Body of pancreas (tissue), 4 donors: ENCODE measurements at regions of chr6 and their contacts with region 1.

Region 1: DNA sequence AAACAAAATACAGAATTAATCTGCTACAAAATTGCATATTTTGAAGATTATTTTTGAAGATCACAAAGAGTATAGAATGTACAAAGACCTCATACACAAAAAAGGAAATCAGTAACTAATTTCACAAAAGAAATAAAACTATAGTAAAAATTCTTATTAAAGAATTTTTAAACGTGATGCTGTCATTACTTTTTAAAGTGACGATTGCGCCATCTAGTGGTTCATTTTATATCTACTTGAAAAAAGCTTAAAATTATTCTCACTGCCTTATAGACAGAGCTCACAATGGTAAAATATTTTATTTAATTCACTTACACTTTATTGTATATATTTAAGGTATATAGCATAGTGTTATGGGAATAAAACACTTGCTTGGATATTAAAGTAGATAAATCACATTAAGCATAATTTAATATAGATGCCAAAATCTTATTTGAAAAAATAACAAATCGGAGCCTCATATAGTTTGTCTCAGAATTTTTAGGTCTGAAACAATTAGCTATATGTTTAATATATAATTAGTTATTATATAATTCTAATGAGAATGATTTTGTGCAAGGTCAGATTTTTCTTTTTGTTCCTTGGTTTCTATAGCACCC is 128.8 kb downstream of the PHF3 start:
- DNase-seq: no peak
- ATAC-seq: peak; percentile 56
- H3K4me3 ChIP-seq: no peak overlapping the region
- H3K27ac ChIP-seq: no peak overlapping the region
- H3K4me1 ChIP-seq: no peaks in the 10 kb centered on the region
- H3K27me3 ChIP-seq: no peaks in the 10 kb centered on the region
- CTCF ChIP-seq: peak; percentile 34 to 83 (median 57)
- POLR2A ChIP-seq: no peak

Region 2: DNA sequence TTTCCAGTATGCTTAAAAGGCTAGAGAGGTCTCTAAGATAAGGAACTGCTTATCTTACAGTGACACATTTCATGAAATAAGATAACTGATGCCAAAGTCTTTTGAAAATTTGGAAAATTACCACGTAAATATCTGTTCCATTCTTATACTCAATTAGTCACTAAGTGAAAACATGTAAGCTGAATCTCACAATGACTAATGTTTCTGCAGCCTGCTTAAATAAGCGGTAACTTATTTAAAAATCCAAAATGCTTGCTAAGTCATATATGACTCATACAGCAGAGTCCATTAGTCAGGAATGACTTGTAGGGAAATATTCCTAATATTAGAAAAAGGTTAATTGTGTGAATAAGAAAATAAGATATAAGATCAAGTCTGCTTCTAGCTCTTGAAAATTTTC is 416.8 kb before region 1 on chr6:
- intact Hi-C with region 1: loop called (anchors 10 kb)
- DNase-seq: no peak
- ATAC-seq: no peak
- H3K4me3 ChIP-seq: no peak overlapping the region
- H3K27ac ChIP-seq: no peak overlapping the region
- H3K4me1 ChIP-seq: peaks cover 5% of the 10 kb centered on the region
- H3K27me3 ChIP-seq: no peaks in the 10 kb centered on the region
- CTCF ChIP-seq: no peak
- POLR2A ChIP-seq: no peak

Region 3: GRCh38 chr6:63584125-63584514 is 180.3 kb before region 1 on chr6:
- intact Hi-C with region 1: loop called (anchors 10 kb)
- DNase-seq: no peak
- ATAC-seq: no peak
- H3K4me3 ChIP-seq: no peak overlapping the region
- H3K27ac ChIP-seq: no peak overlapping the region
- H3K4me1 ChIP-seq: peaks cover 12% of the 10 kb centered on the region
- H3K27me3 ChIP-seq: no peaks in the 10 kb centered on the region
- CTCF ChIP-seq: no peak
- POLR2A ChIP-seq: peak in 1 of 3 donors; percentile 4

Region 4: DNA sequence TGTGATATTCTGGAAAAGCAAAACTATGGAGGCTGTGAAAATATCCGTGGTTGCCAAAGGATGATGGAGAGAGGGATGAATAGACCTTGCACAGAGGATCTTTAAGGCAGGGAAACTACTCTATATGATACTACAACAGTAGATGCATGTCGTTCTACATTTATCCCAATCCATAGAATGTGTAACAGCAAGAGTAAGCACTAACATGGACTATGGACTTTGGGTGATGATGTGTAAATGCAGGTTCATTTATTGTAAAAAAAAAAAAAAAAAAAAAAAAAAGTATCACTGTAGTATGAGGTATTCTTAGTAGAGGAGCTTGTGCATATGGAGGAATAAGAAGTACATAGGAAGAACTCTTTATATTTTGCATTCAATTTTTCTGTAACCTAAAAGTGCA is 378.7 kb after region 1 on chr6:
- intact Hi-C with region 1: no loop called
- DNase-seq: no peak
- ATAC-seq: no peak
- H3K4me3 ChIP-seq: no peak overlapping the region
- H3K27ac ChIP-seq: no peak overlapping the region
- H3K4me1 ChIP-seq: no peaks in the 10 kb centered on the region
- H3K27me3 ChIP-seq: no peaks in the 10 kb centered on the region
- CTCF ChIP-seq: no peak
- POLR2A ChIP-seq: no peak